ENCODE measurements at regions of chr19 and their contacts with region 1.

Region 1: DNA sequence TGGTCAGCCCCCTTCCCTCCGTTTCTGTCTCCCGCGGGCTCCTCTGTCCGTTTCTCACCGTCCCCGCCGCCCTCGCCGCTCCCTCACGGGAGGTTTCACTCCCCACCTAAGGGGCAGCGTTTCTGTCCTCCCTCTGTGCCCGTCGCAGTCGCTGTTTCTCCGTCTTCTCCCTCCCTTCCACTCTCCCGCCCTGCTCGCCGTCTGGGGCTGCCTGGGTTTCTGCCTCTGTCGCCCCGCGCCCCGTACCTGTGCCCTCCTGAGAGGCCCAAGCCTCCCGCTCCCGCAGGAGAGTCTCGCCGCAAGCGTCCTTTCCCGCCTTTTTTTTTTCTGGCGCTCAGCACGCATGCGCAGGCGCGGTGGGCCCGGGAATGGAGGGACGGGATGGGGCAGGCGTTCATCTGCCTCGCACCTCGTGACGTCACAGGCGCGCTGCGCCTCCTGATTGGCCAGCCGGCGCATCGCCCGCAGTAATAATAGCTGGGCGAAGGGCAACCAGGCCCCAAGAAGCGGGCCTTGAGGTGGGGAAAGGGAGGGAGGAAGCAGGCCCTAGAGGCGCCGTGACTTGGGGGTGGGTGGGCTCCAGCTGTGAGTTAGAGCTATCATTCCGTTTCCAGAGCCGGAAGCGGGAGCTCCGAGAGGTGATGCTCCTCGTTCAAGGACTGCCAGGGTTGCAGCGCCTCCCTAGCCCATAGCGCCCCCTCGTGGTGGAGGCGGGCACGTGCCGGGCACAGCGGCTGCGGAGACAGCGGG is 15.4 kb downstream of the SSC5D start:
- DNase-seq: peak; percentile 90 to 94 (median 91)
- H3K4me3 ChIP-seq: peak overlapping the region; percentile 82
- H3K4me3 Mint-ChIP-seq: peak overlapping the region; percentile 70 to 94 (median 85)
- H3K27ac ChIP-seq: peak overlapping the region; percentile 51
- H3K27ac Mint-ChIP-seq: peak overlapping the region; percentile 71 to 98 (median 88)
- H3K4me1 ChIP-seq: peaks cover 5% of the 10 kb centered on the region
- H3K4me1 Mint-ChIP-seq: peaks cover 10 to 14% (median 13%) of the 10 kb centered on the region in 3 donors
- H3K27me3 ChIP-seq: no peaks in the 10 kb centered on the region
- H3K27me3 Mint-ChIP-seq: peaks cover 4 to 10% of the 10 kb centered on the region in 2 donors

Region 2: DNA sequence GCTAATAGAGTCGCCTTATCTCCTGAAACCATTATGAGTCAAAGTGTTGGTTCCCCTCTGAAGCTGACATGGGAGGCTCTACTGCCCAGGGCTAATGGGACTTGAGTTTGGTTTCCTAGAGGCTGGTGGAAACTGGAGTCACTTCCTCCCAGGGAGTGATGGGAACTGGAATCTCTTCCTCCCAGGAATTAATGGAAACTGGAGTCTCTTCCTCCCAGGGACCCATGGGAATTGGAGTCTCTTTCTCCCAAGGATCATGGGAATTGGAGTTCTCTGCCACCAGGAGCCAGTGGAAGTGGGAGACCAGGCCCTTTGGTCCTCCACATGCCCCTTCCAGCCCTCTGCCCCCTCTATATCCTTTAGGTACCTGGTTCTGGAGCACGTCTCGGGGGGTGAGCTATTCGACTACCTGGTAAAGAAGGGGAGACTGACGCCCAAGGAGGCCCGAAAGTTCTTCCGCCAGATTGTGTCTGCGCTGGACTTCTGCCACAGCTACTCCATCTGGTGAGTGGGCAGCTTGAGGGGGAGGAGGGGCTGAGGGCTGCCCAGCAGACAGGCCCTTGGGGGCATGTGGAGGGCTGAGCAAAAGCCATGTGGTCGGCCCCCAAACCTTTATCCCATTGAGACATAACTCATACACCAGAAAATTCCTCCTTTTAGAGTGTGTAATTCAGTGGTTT is 214.4 kb before region 1 on chr19:
- CTCF ChIA-PET with region 1: interaction called, 10 read pairs
- POLR2A ChIA-PET with region 1: no interaction called
- DNase-seq: no peak
- H3K4me3 ChIP-seq: no peak overlapping the region
- H3K4me3 Mint-ChIP-seq: no peak overlapping the region
- H3K27ac ChIP-seq: no peak overlapping the region
- H3K27ac Mint-ChIP-seq: no peak overlapping the region
- H3K4me1 ChIP-seq: peaks cover 6% of the 10 kb centered on the region
- H3K4me1 Mint-ChIP-seq: peaks cover 4 to 10% (median 10%) of the 10 kb centered on the region in 3 donors
- H3K27me3 ChIP-seq: no peaks in the 10 kb centered on the region
- H3K27me3 Mint-ChIP-seq: peaks cover 0 to 2% of the 10 kb centered on the region in 2 donors

Region 3: GRCh38 chr19:55377356-55378131 is 126.1 kb before region 1 on chr19:
- CTCF ChIA-PET with region 1: no interaction called
- POLR2A ChIA-PET with region 1: no interaction called
- DNase-seq: no peak
- H3K4me3 ChIP-seq: no peak overlapping the region
- H3K4me3 Mint-ChIP-seq: no peak overlapping the region
- H3K27ac ChIP-seq: no peak overlapping the region
- H3K27ac Mint-ChIP-seq: no peak overlapping the region
- H3K4me1 ChIP-seq: no peaks in the 10 kb centered on the region
- H3K4me1 Mint-ChIP-seq: peaks cover 14 to 18% (median 17%) of the 10 kb centered on the region in 3 donors
- H3K27me3 ChIP-seq: peaks cover 11% of the 10 kb centered on the region
- H3K27me3 Mint-ChIP-seq: peaks cover 7 to 11% of the 10 kb centered on the region in 2 donors

Region 4: GRCh38 chr19:55467236-55468053 is 36.2 kb before region 1 on chr19:
- CTCF ChIA-PET with region 1: interaction called, 56 read pairs
- POLR2A ChIA-PET with region 1: no interaction called
- DNase-seq: peak; percentile 53 to 73 (median 69)
- H3K4me3 ChIP-seq: no peak overlapping the region
- H3K4me3 Mint-ChIP-seq: peak overlapping the region in 1 of 7 donors; percentile 54
- H3K27ac ChIP-seq: peak overlapping the region; percentile 81
- H3K27ac Mint-ChIP-seq: peak overlapping the region in 2 of 8 donors; percentile 22 to 47
- H3K4me1 ChIP-seq: peaks cover 8% of the 10 kb centered on the region
- H3K4me1 Mint-ChIP-seq: peaks cover 6 to 7% (median 6%) of the 10 kb centered on the region in 3 donors
- H3K27me3 ChIP-seq: no peaks in the 10 kb centered on the region
- H3K27me3 Mint-ChIP-seq: peaks cover 0 to 3% of the 10 kb centered on the region in 2 donors

Region 5: DNA sequence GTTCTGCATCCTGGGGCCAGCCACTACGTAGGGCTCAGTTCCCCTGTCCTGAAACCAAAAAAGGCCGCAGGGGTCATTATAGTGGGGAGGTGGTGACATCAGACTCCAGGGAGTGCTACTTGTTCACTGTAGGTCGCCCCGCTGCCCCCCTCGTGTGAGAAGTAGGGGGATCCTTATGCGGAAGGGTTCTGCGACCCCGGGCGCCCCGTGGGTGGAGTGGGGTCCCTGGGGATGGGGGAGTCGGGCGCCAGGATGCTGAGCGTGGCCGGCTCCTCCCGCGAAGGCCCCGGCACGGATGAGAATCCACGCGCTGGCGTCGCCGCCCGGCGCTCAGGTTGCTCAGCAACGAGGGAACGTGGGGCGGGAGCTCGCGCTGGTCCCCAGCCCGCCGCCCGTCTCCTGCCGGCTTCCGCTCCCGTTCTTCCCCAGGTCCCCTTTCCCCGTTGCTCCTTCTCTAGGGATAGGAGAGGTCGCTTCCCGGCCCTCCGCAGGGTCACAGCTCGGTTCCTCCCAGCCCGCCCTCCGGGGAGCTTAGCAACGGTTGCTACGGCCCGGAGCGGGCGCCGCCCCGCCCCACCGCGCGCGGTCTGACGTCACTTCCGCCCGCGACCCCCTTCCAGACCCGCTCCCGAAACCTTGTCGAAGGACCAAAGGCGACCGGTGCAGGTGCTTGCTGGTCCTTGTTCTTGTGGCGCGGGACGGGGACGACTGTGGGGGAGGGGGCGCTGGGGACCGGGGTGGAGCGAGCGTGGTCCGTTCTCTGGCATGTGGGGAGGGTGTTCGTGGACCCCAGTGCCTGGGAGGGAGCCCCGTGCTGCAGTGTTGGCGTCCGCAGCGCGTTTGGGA is 18.9 kb before region 1 on chr19 and contains the start of gene NAT14:
- CTCF ChIA-PET with region 1: interaction called, 34 read pairs
- POLR2A ChIA-PET with region 1: no interaction called
- DNase-seq: peak; percentile 49 to 82 (median 70)
- H3K4me3 ChIP-seq: peak within 1 kb of the TSS; percentile 64
- H3K4me3 Mint-ChIP-seq: peak within 1 kb of the TSS; percentile 73 to 88 (median 77)
- H3K27ac ChIP-seq: peak within 1 kb of the TSS; percentile 61
- H3K27ac Mint-ChIP-seq: peak within 1 kb of the TSS; percentile 77 to 98 (median 90)
- H3K4me1 ChIP-seq: peaks cover 10% of the 10 kb centered on the region
- H3K4me1 Mint-ChIP-seq: peaks cover 6 to 31% (median 11%) of the 10 kb centered on the region in 3 donors
- H3K27me3 ChIP-seq: no peaks in the 10 kb centered on the region
- H3K27me3 Mint-ChIP-seq: no peaks in the 10 kb centered on the region
- total RNA-seq, gene NAT14: 27.5 to 28.4 TPM

Region 6: GRCh38 chr19:55549500-55550320 is 46.0 kb after region 1 on chr19:
- CTCF ChIA-PET with region 1: no interaction called
- POLR2A ChIA-PET with region 1: no interaction called
- DNase-seq: peak in 1 of 5 donors; percentile 9
- H3K4me3 ChIP-seq: no peak overlapping the region
- H3K4me3 Mint-ChIP-seq: no peak overlapping the region
- H3K27ac ChIP-seq: no peak overlapping the region
- H3K27ac Mint-ChIP-seq: no peak overlapping the region
- H3K4me1 ChIP-seq: no peaks in the 10 kb centered on the region
- H3K4me1 Mint-ChIP-seq: no peaks in the 10 kb centered on the region
- H3K27me3 ChIP-seq: no peaks in the 10 kb centered on the region
- H3K27me3 Mint-ChIP-seq: peaks cover 13 to 45% of the 10 kb centered on the region in 2 donors

Region 7: GRCh38 chr19:55563261-55563690 is 59.6 kb after region 1 on chr19:
- CTCF ChIA-PET with region 1: no interaction called
- POLR2A ChIA-PET with region 1: no interaction called
- DNase-seq: no peak
- H3K4me3 ChIP-seq: no peak overlapping the region
- H3K4me3 Mint-ChIP-seq: no peak overlapping the region
- H3K27ac ChIP-seq: no peak overlapping the region
- H3K27ac Mint-ChIP-seq: peak overlapping the region in 1 of 8 donors; percentile 58
- H3K4me1 ChIP-seq: no peaks in the 10 kb centered on the region
- H3K4me1 Mint-ChIP-seq: no peaks in the 10 kb centered on the region
- H3K27me3 ChIP-seq: no peaks in the 10 kb centered on the region
- H3K27me3 Mint-ChIP-seq: peaks cover 24 to 33% of the 10 kb centered on the region in 2 donors

Region 8: GRCh38 chr19:55580628-55581144 is 77.0 kb after region 1 on chr19 and contains the start of gene ZNF579:
- CTCF ChIA-PET with region 1: no interaction called
- POLR2A ChIA-PET with region 1: no interaction called
- DNase-seq: peak; percentile 53 to 79 (median 62)
- H3K4me3 ChIP-seq: peak within 1 kb of the TSS; percentile 56
- H3K4me3 Mint-ChIP-seq: peak within 1 kb of the TSS; percentile 80 to 91 (median 86)
- H3K27ac ChIP-seq: peak within 1 kb of the TSS; percentile 12
- H3K27ac Mint-ChIP-seq: peak within 1 kb of the TSS; percentile 75 to 99 (median 92)
- H3K4me1 ChIP-seq: peaks cover 16% of the 10 kb centered on the region
- H3K4me1 Mint-ChIP-seq: peaks cover 24 to 30% (median 30%) of the 10 kb centered on the region in 3 donors
- H3K27me3 ChIP-seq: no peaks in the 10 kb centered on the region
- H3K27me3 Mint-ChIP-seq: peaks cover 4% of the 10 kb centered on the region in 2 donors
- total RNA-seq, gene ZNF579: 6.0 to 6.6 TPM

Region 9: DNA sequence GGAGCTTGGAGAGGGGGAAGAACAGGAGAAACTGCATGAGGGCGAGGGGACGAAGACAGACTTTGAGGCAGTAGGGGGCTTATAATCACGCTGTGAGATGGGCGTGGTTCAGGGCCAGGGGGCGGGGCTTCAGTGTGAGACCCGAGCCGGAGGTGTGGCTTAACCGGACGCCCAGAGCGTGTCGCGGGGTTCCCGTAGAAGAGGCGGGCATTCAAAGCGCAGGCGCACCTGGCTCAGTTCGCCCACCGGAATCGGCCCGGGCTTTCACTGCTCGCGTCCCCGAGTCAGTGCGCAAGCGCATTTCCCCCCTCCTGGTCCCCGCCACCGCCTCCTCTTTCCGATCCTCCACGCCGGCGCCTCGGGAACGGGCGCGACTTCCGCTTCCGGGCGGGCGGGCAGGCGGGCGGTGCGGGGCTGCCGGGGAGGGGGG is 101.5 kb after region 1 on chr19:
- CTCF ChIA-PET with region 1: interaction called, 26 read pairs
- POLR2A ChIA-PET with region 1: interaction called, 3 read pairs
- DNase-seq: peak; percentile 97 to 98 (median 98)
- H3K4me3 ChIP-seq: peak overlapping the region; percentile 71
- H3K4me3 Mint-ChIP-seq: peak overlapping the region; percentile 85 to 93 (median 88)
- H3K27ac ChIP-seq: peak overlapping the region; percentile 80
- H3K27ac Mint-ChIP-seq: peak overlapping the region; percentile 85 to 97 (median 91)
- H3K4me1 ChIP-seq: peaks cover 35% of the 10 kb centered on the region
- H3K4me1 Mint-ChIP-seq: peaks cover 43 to 70% (median 65%) of the 10 kb centered on the region in 3 donors
- H3K27me3 ChIP-seq: no peaks in the 10 kb centered on the region
- H3K27me3 Mint-ChIP-seq: no peaks in the 10 kb centered on the region

Region 10: DNA sequence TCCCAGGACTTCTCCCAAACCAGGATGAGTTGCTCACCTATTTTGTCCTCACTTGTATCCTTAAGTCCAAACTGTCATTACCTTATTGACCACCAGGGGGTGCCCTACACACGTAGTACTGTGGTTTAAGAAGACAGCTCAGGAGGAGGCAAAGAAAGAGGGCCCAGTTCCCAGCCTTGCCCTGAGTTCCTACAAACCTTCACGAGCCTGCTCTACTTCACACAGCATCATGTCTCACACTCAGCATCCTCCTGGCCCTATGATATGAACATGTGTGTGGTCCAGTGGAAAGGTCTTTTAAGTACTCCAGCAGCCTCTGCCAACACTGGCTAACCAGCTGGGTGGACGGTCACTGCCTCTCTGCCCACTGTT is 128.8 kb after region 1 on chr19:
- CTCF ChIA-PET with region 1: interaction called, 25 read pairs
- POLR2A ChIA-PET with region 1: interaction called, 6 read pairs
- DNase-seq: peak; percentile 81 to 92 (median 87)
- H3K4me3 ChIP-seq: no peak overlapping the region
- H3K4me3 Mint-ChIP-seq: peak overlapping the region in 4 of 7 donors; percentile 2 to 69 (median 36)
- H3K27ac ChIP-seq: no peak overlapping the region
- H3K27ac Mint-ChIP-seq: peak overlapping the region in 7 of 8 donors; percentile 6 to 83 (median 57)
- H3K4me1 ChIP-seq: peaks cover 43% of the 10 kb centered on the region
- H3K4me1 Mint-ChIP-seq: peaks cover 38 to 49% (median 47%) of the 10 kb centered on the region in 3 donors
- H3K27me3 ChIP-seq: no peaks in the 10 kb centered on the region
- H3K27me3 Mint-ChIP-seq: peaks cover 0 to 7% of the 10 kb centered on the region in 2 donors

Measured in CD8-positive, alpha-beta memory T cell (primary cell).